ENCODE measurements at regions of chrX and their contacts with region 1.

Region 1: GRCh38 chrX:24682739-24683432 is 10.8 kb upstream of the POLA1 start:
- DNase-seq: no peak
- ATAC-seq: no peak
- H3K4me3 ChIP-seq: no peak overlapping the region
- H3K27ac ChIP-seq: no peak overlapping the region
- H3K4me1 ChIP-seq: no peaks in the 10 kb centered on the region
- H3K27me3 ChIP-seq: peaks cover 0 to 5% (median 0%) of the 10 kb centered on the region in 9 donors
- CTCF ChIP-seq: no peak
- POLR2A ChIP-seq: no peak

Region 2: DNA sequence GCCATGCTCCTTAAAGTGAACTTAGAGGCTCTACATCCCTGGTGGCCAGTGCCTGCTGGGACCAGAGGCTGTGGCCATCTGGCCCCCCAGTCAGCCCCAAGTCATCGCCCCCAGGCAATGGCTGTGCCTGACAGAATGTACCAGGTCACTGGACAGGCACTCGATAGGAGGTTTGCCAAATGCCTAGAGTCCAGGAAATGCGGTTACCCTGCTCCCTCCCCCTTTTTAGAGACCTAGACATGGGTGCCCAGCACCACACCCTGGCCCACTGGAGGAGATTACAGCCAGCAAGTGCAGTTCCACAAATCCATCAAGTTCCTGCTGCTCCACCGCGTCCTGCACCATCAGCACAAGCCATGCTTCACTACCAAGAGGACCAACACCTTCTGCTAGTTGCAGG is 549.6 kb before region 1 on chrX:
- intact Hi-C with region 1: no loop called
- DNase-seq: no peak
- ATAC-seq: no peak
- H3K4me3 ChIP-seq: no peak overlapping the region
- H3K27ac ChIP-seq: no peak overlapping the region
- H3K4me1 ChIP-seq: no peaks in the 10 kb centered on the region
- H3K27me3 ChIP-seq: peaks cover 0 to 15% (median 0%) of the 10 kb centered on the region in 9 donors
- CTCF ChIP-seq: no peak
- POLR2A ChIP-seq: no peak

Region 3: GRCh38 chrX:24515447-24515846 is 167.4 kb before region 1 on chrX:
- intact Hi-C with region 1: loop called in 1 of 10 experiments (anchors 10 kb)
- DNase-seq: no peak
- ATAC-seq: no peak
- H3K4me3 ChIP-seq: no peak overlapping the region
- H3K27ac ChIP-seq: no peak overlapping the region
- H3K4me1 ChIP-seq: no peaks in the 10 kb centered on the region
- H3K27me3 ChIP-seq: no peaks in the 10 kb centered on the region
- CTCF ChIP-seq: peak in 6 of 12 donors; percentile 13 to 42 (median 19)
- POLR2A ChIP-seq: no peak

Region 4: DNA sequence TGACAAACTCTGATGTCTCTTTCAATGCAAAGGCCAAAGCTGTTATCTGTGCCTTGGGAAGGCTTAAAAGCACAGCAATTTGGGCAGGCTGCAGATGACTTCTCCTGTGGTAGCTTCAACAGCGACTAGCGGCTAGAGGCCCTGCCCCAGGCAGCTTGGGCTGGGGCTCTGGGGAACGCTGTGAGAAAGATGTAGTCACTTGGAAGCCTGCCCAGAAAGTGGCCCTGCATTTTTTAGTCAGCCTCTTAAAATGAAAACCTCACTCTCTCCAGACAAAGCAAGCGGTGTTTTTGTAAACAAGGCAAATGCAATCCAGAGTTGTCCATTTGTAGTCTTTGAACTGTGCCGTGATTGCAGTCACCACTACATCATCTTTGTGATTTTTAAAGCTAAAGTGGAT is 63.2 kb before region 1 on chrX:
- intact Hi-C with region 1: no loop called
- DNase-seq: peak in 2 of 5 donors; percentile 10 to 17
- ATAC-seq: no peak
- H3K4me3 ChIP-seq: no peak overlapping the region
- H3K27ac ChIP-seq: no peak overlapping the region
- H3K4me1 ChIP-seq: no peaks in the 10 kb centered on the region
- H3K27me3 ChIP-seq: peaks cover 0 to 10% (median 0%) of the 10 kb centered on the region in 9 donors
- CTCF ChIP-seq: no peak
- POLR2A ChIP-seq: no peak

Region 5: DNA sequence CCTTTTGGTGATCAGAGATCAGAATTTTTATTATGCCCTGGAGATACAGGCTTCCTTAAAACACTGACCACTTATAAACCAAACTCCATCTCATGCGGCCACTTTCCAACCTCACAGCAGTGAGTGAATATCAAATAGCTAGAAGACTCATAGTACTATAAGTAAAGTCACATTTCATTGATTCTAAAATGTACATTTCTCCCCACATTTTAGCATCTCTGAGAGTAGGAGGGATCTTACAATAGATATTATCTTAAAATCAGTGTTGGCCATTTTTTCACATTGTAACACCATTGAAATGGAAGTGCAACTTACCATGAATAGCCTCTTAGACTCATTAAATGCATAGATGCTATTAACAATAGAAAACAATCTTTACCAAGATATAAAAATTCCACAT is 53.2 kb before region 1 on chrX:
- intact Hi-C with region 1: no loop called
- DNase-seq: no peak
- ATAC-seq: no peak
- H3K4me3 ChIP-seq: no peak overlapping the region
- H3K27ac ChIP-seq: no peak overlapping the region
- H3K4me1 ChIP-seq: no peaks in the 10 kb centered on the region
- H3K27me3 ChIP-seq: peaks cover 0 to 13% (median 0%) of the 10 kb centered on the region in 9 donors
- CTCF ChIP-seq: no peak
- POLR2A ChIP-seq: no peak